ENCODE measurements at regions of chr4 and their contacts with region 1.

Region 1: DNA sequence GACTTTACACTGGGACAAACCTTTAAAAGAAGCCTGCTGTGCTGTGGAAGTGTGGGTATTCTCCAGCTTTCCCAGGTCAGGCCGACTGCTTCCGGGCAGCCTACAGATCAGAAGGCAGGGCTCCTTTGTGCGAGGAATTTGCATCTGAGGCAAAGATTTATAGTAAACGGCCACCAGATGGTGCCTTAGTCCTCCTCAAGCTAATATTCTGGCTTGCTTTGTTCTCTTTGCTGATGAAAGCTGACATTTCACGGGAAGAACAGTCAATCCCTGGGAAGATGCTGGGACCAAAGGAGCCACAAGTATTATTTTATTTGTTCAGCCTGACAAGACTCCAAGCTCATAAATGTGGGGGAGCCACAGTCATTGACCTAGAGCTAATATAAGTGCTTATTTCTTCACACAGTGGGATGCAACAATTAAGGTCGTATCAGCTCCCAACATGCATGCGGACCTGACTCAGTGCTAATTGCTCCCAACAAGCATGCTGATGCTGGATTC is 120.7 kb upstream of the TRIM2 start:
- DNase-seq: no peak
- ATAC-seq: peak; percentile 67 to 68
- H3K4me3 ChIP-seq: no peak overlapping the region
- H3K27ac ChIP-seq: no peak overlapping the region
- H3K4me1 ChIP-seq: peaks cover 2 to 4% of the 10 kb centered on the region in 2 donors
- H3K27me3 ChIP-seq: no peaks in the 10 kb centered on the region
- CTCF ChIP-seq: peak in 4 of 5 experiments; percentile 30 to 55 (median 48)
- POLR2A ChIP-seq: no peak

Region 2: GRCh38 chr4:152850377-152850776 is 233.1 kb before region 1 on chr4:
- in situ Hi-C with region 1: loop called in 3 of 4 experiments (anchors 5 kb)
- intact Hi-C with region 1: loop called (anchors 1 kb)
- DNase-seq: peak; percentile 51 to 72
- ATAC-seq: peak; percentile 94 to 99
- H3K4me3 ChIP-seq: peak overlapping the region in 2 of 4 donors; percentile 18 to 24
- H3K27ac ChIP-seq: peak overlapping the region in 3 of 4 donors; percentile 65 to 67 (median 67)
- H3K4me1 ChIP-seq: peaks cover 10 to 11% of the 10 kb centered on the region in 2 donors
- H3K27me3 ChIP-seq: no peaks in the 10 kb centered on the region
- CTCF ChIP-seq: no peak
- POLR2A ChIP-seq: no peak

Region 3: GRCh38 chr4:153095448-153096204 is 12.1 kb after region 1 on chr4:
- in situ Hi-C with region 1: no loop called
- intact Hi-C with region 1: no loop called
- DNase-seq: no peak
- ATAC-seq: no peak
- H3K4me3 ChIP-seq: no peak overlapping the region
- H3K27ac ChIP-seq: no peak overlapping the region
- H3K4me1 ChIP-seq: no peaks in the 10 kb centered on the region
- H3K27me3 ChIP-seq: no peaks in the 10 kb centered on the region
- CTCF ChIP-seq: no peak
- POLR2A ChIP-seq: no peak

Region 4: DNA sequence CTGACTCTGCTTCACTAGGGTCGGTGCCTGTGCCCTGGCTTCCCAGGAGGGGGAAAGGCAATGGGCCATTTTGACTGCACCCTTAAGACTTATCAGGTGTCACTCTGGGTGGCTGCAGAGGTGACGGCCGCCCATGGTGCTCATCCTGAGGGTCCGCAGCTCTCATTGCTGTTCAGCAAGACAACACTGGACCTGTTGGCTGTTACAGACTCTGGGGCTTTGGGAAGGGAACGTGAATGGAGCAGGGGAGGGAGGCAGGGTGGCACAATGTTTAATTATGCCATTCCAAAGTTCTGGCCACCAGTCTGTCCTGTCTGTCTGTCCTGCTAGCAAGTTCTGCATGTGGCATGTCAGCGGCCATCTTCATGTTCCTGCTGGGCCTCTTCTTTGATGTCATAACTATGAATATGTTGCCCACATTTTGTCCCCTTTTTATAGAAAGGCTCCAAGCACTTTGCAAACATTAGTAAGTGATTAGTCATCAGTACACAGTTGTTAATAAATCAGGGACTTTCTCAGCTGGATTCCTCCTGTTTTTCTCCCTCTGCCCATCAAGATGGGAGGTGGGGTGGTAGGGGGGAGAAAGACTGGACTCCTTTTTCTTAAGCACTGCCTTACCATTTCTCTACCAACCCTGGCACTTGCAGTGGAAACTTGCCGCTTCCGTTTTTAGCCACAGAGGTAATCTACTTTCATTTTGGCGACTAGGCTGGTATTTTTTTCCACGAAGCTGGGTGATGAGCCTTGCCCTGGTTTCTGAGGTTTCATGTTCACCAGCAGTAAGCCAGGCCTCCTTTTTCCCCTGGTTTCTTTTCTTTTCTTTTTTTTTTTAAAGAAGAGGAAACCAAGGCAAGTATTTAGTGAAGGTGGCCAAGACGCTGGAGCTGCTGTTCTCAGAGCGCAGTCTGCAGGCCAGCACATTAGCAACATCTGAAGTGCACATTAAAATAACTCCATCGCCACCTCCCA is 32.1 kb after region 1 on chr4:
- in situ Hi-C with region 1: no loop called
- intact Hi-C with region 1: no loop called
- DNase-seq: no peak
- ATAC-seq: peak; percentile 36 to 75
- H3K4me3 ChIP-seq: peak overlapping the region; percentile 16 to 53 (median 29)
- H3K27ac ChIP-seq: peak overlapping the region; percentile 20 to 64 (median 48)
- H3K4me1 ChIP-seq: peaks cover 13 to 16% of the 10 kb centered on the region in 2 donors
- H3K27me3 ChIP-seq: no peaks in the 10 kb centered on the region
- CTCF ChIP-seq: no peak
- POLR2A ChIP-seq: no peak

Region 5: GRCh38 chr4:153344131-153345010 is 260.9 kb after region 1 on chr4 and contains the start of gene MND1:
- in situ Hi-C with region 1: no loop called
- intact Hi-C with region 1: no loop called
- DNase-seq: peak; percentile 58 to 64
- ATAC-seq: peak; percentile 90 to 94
- H3K4me3 ChIP-seq: peak within 1 kb of the TSS; percentile 70 to 97 (median 76)
- H3K27ac ChIP-seq: peak within 1 kb of the TSS in 1 of 4 donors; percentile 16
- H3K4me1 ChIP-seq: peaks cover 0 to 4% of the 10 kb centered on the region in 2 donors
- H3K27me3 ChIP-seq: no peaks in the 10 kb centered on the region
- CTCF ChIP-seq: peak; percentile 74 to 97 (median 87)
- POLR2A ChIP-seq: no peak
- total RNA-seq, gene MND1: 1.6 TPM in 1 of 4 donors, not detected in the others